AG04449 (cell line): ENCODE measurements at regions of chr5 and their contacts with region 1.

Region 1: GRCh38 chr5:122192497-122193496 is 63.5 kb downstream of the ZNF474 start:
- DNase-seq: no peak
- H3K4me3 ChIP-seq: no peak overlapping the region
- CTCF ChIP-seq: peak; percentile 55

Region 2: DNA sequence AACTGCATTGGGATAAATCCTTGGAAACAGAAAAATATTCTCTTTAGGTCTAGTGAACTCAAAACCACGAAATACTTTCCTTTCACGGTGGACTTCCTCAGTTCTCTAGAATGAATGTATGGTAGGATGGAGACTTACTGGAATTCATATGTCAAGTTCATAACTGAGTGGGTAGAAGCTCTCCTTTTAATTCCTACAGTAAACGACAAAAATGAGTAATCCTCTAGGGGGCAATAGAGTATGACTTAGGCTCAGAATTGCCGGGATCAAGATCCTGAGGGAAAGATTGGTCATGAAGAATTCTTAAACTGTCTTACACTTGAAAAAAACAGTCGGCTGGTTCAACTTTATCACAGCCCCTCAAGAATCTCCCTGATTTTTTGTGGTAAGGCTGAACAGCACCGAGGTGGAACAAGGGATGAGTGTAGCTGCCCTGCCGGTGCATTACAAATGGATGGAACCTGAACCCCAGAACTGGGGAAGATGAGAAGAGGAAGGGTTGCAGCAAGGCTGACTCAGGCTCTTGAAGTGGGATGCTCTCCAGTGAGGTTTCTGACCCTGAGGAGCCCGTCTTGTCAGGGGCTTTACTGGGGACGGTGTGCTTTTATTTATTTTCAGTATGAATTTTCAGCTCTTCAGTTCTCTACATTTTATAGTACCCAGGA is 100.7 kb before region 1 on chr5:
- CTCF ChIA-PET with region 1: interaction called, 10 read pairs
- POLR2A ChIA-PET with region 1: no interaction called
- DNase-seq: peak; percentile 77
- H3K4me3 ChIP-seq: peak overlapping the region; percentile 19
- CTCF ChIP-seq: peak; percentile 21

Region 3: GRCh38 chr5:122149321-122150090 is 43.3 kb before region 1 on chr5:
- CTCF ChIA-PET with region 1: no interaction called
- POLR2A ChIA-PET with region 1: no interaction called
- DNase-seq: no peak
- H3K4me3 ChIP-seq: no peak overlapping the region
- CTCF ChIP-seq: no peak

Region 4: DNA sequence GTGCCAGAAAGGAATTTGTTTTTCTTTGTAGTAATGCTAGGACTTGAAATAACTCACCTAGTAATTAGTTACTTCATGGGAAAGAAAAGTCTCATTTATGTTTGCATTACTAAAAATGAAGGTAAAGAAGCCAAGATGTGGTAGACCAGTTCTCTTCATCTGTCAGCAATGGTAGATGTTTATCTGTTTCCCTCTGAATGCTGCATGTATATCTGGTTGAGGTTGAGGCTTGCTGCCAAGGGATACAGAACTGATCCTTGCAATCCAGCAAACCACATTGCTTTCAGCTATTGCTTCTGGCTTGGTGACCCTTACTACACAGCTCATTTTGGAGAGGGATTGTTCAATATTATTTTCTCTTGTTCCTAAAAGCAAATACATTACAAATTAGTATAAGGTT is 10.2 kb after region 1 on chr5:
- CTCF ChIA-PET with region 1: interaction called, 26 read pairs
- POLR2A ChIA-PET with region 1: no interaction called
- DNase-seq: no peak
- H3K4me3 ChIP-seq: no peak overlapping the region
- CTCF ChIP-seq: no peak

Region 5: DNA sequence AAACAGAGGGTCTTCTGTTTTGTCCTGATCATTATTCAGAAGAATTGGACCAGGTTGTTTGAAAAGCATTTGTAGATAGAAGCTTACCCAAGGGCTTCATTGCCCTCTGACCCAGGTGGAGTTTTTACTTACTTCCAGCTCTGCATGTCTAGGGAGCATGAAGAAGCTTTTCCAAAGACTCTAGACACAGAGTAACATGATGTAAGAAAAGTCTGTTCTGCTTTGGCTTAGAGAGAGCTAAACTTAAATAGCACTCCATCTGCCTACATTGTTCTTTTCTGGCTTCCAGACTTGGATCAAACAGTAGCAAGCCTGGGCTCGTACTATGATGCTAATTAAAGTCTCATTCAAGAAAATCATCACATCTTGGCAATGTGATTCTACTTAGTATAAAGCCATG is 231.3 kb after region 1 on chr5:
- CTCF ChIA-PET with region 1: interaction called, 22 read pairs
- POLR2A ChIA-PET with region 1: no interaction called
- DNase-seq: no peak
- H3K4me3 ChIP-seq: no peak overlapping the region
- CTCF ChIP-seq: no peak

Region 6: GRCh38 chr5:122492664-122493063 is 299.9 kb after region 1 on chr5:
- CTCF ChIA-PET with region 1: interaction called, 18 read pairs
- POLR2A ChIA-PET with region 1: no interaction called
- DNase-seq: no peak
- H3K4me3 ChIP-seq: no peak overlapping the region
- CTCF ChIP-seq: no peak